SK-N-SH (cell line): ENCODE measurements at regions of chr9 and their contacts with region 1.

Region 1: GRCh38 chr9:98315551-98316060 is 60.2 kb upstream of the TBC1D2 start:
- DNase-seq: peak; percentile 89
- H3K4me3 ChIP-seq: peak overlapping the region in 1 of 2 experiments; percentile 36; a peak in 1 of 4 replicates
- H3K27ac ChIP-seq: no peak overlapping the region
- H3K4me1 ChIP-seq: peaks cover 5 to 7% of the 10 kb centered on the region in 2 experiments; a peak in 2 of 4 replicates
- H3K27me3 ChIP-seq: no peaks in the 10 kb centered on the region; the same call in 1 of the 2 replicates
- CTCF ChIP-seq: peak; percentile 97
- EP300 ChIP-seq: no peak
- RAD21 ChIP-seq: peak; percentile 94

Region 2: GRCh38 chr9:98298476-98298875 is 17.1 kb before region 1 on chr9:
- CTCF ChIA-PET with region 1: interaction called, 15 read pairs
- POLR2A ChIA-PET with region 1: no interaction called
- DNase-seq: no peak
- H3K4me3 ChIP-seq: no peak overlapping the region
- H3K27ac ChIP-seq: no peak overlapping the region
- H3K4me1 ChIP-seq: peaks cover 0 to 2% of the 10 kb centered on the region in 2 experiments; a peak in 1 of 4 replicates
- H3K27me3 ChIP-seq: peaks cover 9% of the 10 kb centered on the region; the same call in 1 of the 2 replicates
- CTCF ChIP-seq: no peak
- EP300 ChIP-seq: no peak
- RAD21 ChIP-seq: no peak

Region 3: DNA sequence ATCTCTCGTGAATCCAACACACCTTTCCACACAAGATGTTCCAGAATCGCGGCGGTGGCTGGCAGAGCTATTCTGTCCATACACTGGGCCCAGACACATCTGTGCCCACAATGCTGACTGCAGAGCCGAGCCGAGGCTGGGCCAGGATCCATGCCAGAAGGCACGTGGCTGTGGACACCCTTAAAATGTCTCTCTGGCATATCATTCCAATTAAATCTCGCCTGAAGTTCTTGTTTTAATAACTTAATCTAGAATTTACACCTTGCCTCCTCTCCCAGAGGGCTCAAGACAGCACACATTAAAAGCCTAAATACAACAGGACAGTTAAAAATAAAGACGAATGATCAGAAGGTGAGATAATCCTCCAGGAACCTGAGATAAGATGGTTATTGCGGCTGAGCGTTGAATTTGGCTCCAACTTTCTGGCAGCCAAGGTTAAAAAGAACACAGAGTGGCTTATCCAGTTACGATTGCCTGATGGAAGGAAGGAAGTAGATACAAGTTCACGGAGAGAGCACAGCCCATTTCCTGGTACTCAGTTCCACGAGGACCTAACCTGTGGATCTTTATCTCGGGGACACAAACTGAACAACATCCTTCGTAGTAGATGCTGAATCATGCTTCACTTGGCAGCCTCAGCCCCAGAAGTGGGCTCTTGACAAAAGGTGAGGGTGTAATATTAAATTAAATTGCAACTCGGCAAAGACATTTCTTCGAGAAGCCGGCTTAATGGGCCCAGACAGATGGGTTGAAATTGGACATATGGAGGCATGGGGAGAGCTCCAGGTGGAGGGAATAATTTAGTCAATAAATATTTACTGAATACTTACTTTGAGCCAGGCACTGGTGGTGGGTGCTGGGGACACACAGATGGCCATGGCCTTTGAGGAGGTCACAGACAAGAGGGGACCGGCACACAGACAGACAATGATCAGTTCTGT is 25.8 kb after region 1 on chr9:
- CTCF ChIA-PET with region 1: interaction called, 10 read pairs
- POLR2A ChIA-PET with region 1: no interaction called
- DNase-seq: no peak
- H3K4me3 ChIP-seq: no peak overlapping the region
- H3K27ac ChIP-seq: no peak overlapping the region
- H3K4me1 ChIP-seq: peaks cover 0 to 2% of the 10 kb centered on the region in 2 experiments; a peak in 1 of 4 replicates
- H3K27me3 ChIP-seq: peaks cover 7% of the 10 kb centered on the region; the same call in 1 of the 2 replicates
- CTCF ChIP-seq: no peak
- EP300 ChIP-seq: no peak
- RAD21 ChIP-seq: no peak

Region 4: DNA sequence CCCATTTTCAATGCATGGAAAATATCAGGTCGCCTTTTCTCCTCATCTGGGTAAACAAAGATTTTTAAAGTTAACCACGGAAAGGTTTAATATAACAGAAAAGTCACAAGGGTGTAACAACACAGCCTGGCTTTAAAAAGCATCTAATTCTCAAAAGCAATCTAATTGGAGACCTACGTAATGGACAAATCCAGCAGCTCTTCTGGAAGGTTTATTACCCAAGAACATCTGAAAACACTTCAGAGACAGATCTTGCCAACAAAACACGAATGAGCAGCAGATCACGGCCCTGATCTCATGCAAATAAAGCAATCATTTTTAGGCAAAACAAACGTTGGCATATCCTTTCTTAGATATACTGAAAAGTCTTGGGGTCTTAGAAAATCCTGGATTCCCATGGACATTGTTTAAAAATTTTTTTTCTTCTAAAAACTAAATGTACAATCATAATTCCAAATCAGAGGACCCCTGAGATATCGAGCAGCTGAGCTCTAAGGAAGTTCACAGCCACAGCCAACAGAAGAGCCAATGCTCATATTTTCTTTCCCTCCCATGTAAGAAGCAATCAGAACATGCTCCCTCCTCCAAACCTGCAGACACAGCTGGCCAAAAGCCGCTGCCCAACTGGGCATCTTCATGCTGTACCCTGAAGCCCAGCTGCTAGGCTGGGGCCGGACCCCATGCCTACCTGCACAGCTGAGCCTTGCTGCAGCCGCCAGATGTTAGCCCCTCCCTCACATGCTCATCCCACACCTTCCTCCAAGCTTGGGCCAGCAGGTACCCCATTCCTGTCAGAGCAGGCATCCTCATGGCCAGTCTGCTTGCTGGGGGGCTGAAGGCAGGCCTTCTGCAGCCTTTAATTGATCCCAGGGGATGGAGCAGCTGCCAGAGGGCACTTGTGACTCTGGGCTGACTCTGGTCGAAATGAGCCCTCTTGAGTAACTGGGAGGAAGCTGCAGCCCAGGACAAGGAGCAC is 469.5 kb after region 1 on chr9:
- CTCF ChIA-PET with region 1: interaction called, 198 read pairs
- POLR2A ChIA-PET with region 1: no interaction called
- DNase-seq: no peak
- H3K4me3 ChIP-seq: no peak overlapping the region
- H3K27ac ChIP-seq: no peak overlapping the region
- H3K4me1 ChIP-seq: no peaks in the 10 kb centered on the region; a peak in 1 of 4 replicates
- H3K27me3 ChIP-seq: no peaks in the 10 kb centered on the region
- CTCF ChIP-seq: no peak
- EP300 ChIP-seq: no peak
- RAD21 ChIP-seq: no peak